ENCODE measurements at regions of chr15 and their contacts with region 1.

Region 1: GRCh38 chr15:63752075-63752684 is 81.6 kb downstream of the HERC1 start:
- DNase-seq: peak; percentile 65
- H3K4me3 ChIP-seq: no peak overlapping the region
- H3K27ac ChIP-seq: peak overlapping the region in 1 of 2 donors; percentile 29
- H3K4me1 ChIP-seq: no peaks in the 10 kb centered on the region
- H3K27me3 ChIP-seq: no peaks in the 10 kb centered on the region
- CTCF ChIP-seq: peak in 3 of 4 experiments; percentile 57 to 93 (median 89)
- POLR2A ChIP-seq: no peak

Region 2: GRCh38 chr15:63504247-63504978 is 247.8 kb before region 1 on chr15 and contains the start of gene USP3:
- intact Hi-C with region 1: no loop called
- DNase-seq: peak; percentile 93
- H3K4me3 ChIP-seq: peak within 1 kb of the TSS; percentile 79 to 91
- H3K27ac ChIP-seq: peak within 1 kb of the TSS; percentile 91 to 99
- H3K4me1 ChIP-seq: peaks cover 22% of the 10 kb centered on the region
- H3K27me3 ChIP-seq: no peaks in the 10 kb centered on the region
- CTCF ChIP-seq: peak; percentile 38 to 74 (median 44)
- POLR2A ChIP-seq: peak; percentile 75
- total RNA-seq, gene USP3: 44.2 to 45.8 TPM

Region 3: GRCh38 chr15:63638839-63639238 is 113.3 kb before region 1 on chr15:
- intact Hi-C with region 1: no loop called
- DNase-seq: no peak
- H3K4me3 ChIP-seq: no peak overlapping the region
- H3K27ac ChIP-seq: no peak overlapping the region
- H3K4me1 ChIP-seq: no peaks in the 10 kb centered on the region
- H3K27me3 ChIP-seq: no peaks in the 10 kb centered on the region
- CTCF ChIP-seq: no peak
- POLR2A ChIP-seq: no peak

Region 4: GRCh38 chr15:63891079-63891767 is 139.0 kb after region 1 on chr15:
- intact Hi-C with region 1: loop called (anchors 5 kb)
- DNase-seq: peak; percentile 70
- H3K4me3 ChIP-seq: no peak overlapping the region
- H3K27ac ChIP-seq: no peak overlapping the region
- H3K4me1 ChIP-seq: no peaks in the 10 kb centered on the region
- H3K27me3 ChIP-seq: no peaks in the 10 kb centered on the region
- CTCF ChIP-seq: peak; percentile 72 to 87 (median 85)
- POLR2A ChIP-seq: no peak

Region 5: DNA sequence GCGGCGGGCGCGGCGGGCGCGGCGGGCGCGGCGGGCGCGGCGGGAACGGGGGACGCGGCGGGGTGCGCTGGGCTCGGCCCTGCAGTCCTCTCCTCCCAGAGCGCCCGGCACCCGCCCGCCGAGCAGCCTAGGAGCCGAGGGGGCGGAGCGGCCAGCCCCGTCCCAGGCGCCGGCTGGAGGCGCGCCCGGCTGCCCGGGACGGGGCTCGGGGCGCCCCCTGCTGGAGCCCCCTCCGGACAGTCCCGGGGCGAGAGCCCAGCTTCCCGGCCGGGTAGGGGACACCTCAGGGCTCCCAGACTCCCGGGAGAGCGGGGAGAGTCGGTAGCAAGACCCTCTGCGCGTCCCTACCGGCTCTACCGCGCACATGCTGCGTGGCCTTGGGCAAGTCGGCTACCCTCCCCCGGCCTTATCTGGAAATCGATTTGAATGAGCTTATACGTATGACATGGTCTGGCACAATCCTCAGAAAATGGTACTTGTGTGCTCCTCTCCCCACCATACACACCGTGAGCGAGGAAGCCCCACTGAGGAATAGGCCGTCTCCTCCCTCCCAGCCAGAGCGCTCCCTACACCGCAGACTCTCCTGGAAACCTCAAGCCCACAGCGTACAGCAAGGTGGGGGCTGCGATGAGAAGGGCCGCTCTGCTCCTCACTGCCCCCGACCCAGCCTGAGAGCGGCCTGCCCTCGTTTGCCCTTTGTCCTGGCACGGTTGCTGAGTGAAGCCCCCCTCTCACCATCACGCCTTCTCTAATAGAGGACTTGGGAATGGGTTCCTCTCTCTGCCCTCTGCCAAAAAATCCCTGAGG is 294.4 kb after region 1 on chr15 and contains the start of gene DAPK2:
- intact Hi-C with region 1: loop called (anchors 5 kb)
- DNase-seq: peak; percentile 51
- H3K4me3 ChIP-seq: peak within 1 kb of the TSS; percentile 50 to 63
- H3K27ac ChIP-seq: peak within 1 kb of the TSS; percentile 4 to 26
- H3K4me1 ChIP-seq: no peaks in the 10 kb centered on the region
- H3K27me3 ChIP-seq: no peaks in the 10 kb centered on the region
- CTCF ChIP-seq: peak; percentile 69 to 92 (median 80)
- POLR2A ChIP-seq: no peak
- total RNA-seq, gene DAPK2: 13.8 to 40.4 TPM

Region 6: GRCh38 chr15:64067564-64068030 is 315.4 kb after region 1 on chr15:
- intact Hi-C with region 1: loop called (anchors 5 kb)
- DNase-seq: peak; percentile 57
- H3K4me3 ChIP-seq: no peak overlapping the region
- H3K27ac ChIP-seq: peak overlapping the region; percentile 44 to 49
- H3K4me1 ChIP-seq: peaks cover 11% of the 10 kb centered on the region
- H3K27me3 ChIP-seq: no peaks in the 10 kb centered on the region
- CTCF ChIP-seq: peak; percentile 74 to 89 (median 84)
- POLR2A ChIP-seq: no peak